Psoas muscle (tissue), 8 donors: ENCODE measurements at regions of chr6 and their contacts with region 1.

Region 1: GRCh38 chr6:7615611-7616383 is 25.8 kb downstream of the SNRNP48 start:
- DNase-seq: no peak
- ATAC-seq: peak in 3 of 4 donors; percentile 47 to 82 (median 69)
- H3K4me3 ChIP-seq: no peak overlapping the region
- H3K27ac ChIP-seq: no peak overlapping the region
- H3K4me1 ChIP-seq: no peaks in the 10 kb centered on the region
- H3K27me3 ChIP-seq: no peaks in the 10 kb centered on the region
- CTCF ChIP-seq: peak; percentile 81

Region 2: DNA sequence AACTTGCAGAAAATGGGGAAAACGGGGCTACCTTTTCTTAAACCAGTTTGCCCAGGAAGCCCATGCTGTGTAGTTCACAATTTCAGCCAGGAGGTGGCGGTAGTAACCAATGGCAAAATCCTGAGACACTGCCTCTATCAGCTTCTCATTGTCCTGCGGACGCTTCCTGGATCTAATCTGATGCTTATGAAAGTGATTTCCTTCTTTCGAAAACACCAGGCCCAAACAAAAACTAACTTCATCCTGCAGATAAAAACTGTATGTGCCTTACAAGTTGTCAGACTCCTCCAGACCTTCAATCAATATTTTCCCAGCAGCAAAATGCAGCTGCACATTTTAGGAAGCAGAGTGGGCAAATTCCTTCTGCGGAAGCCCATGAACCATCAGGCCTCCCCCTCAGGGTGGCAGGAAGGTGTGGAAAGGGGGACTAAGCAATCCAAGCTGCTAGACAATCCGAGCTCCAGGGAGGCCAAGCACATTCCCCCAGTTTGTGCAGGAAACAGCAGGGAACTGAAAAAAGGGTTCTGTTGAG is 938.8 kb before region 1 on chr6:
- intact Hi-C with region 1: loop called (anchors 5 to 10 kb)
- DNase-seq: peak; percentile 72 to 79
- ATAC-seq: peak; percentile 83 to 95 (median 91)
- H3K4me3 ChIP-seq: no peak overlapping the region
- H3K27ac ChIP-seq: no peak overlapping the region
- H3K4me1 ChIP-seq: no peaks in the 10 kb centered on the region
- H3K27me3 ChIP-seq: no peaks in the 10 kb centered on the region
- CTCF ChIP-seq: peak; percentile 98

Region 3: GRCh38 chr6:7276199-7276524 is 339.6 kb before region 1 on chr6:
- intact Hi-C with region 1: loop called in 1 of 2 experiments (anchors 1 kb)
- DNase-seq: no peak
- ATAC-seq: no peak
- H3K4me3 ChIP-seq: no peak overlapping the region
- H3K27ac ChIP-seq: no peak overlapping the region
- H3K4me1 ChIP-seq: no peaks in the 10 kb centered on the region
- H3K27me3 ChIP-seq: no peaks in the 10 kb centered on the region
- CTCF ChIP-seq: no peak

Region 4: DNA sequence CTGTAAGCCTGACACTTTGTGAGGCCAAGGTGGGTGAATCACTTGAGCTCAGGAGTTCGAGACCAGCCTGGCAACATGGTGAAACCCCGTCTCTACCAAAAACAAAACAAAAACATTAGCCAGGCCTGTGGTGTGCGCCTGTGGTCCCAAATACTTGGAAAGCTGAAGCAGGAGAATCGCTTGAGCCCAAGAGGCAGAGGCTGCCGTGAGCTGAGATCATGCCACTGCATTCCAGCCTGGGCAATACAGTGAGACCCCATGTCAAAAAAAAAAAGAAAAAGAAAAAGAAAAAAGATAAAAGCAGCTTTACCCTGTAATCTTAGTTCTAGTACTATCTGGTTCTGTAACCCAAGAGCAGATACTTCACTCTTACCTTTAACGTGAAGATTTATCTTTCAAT is 330.4 kb before region 1 on chr6:
- intact Hi-C with region 1: loop called in 1 of 2 experiments (anchors 5 kb)
- DNase-seq: no peak
- ATAC-seq: no peak
- H3K4me3 ChIP-seq: no peak overlapping the region
- H3K27ac ChIP-seq: no peak overlapping the region
- H3K4me1 ChIP-seq: no peaks in the 10 kb centered on the region
- H3K27me3 ChIP-seq: no peaks in the 10 kb centered on the region
- CTCF ChIP-seq: no peak